Activated CD8-positive, alpha-beta T cell treated with anti-CD3 and anti-CD28 coated beads, Interleukin-2, amount 10 ng/mL, durations not matched to agents 7 days and 5 days (primary cell): ENCODE measurements at regions of chr20 and their contacts with region 1.

Region 1: DNA sequence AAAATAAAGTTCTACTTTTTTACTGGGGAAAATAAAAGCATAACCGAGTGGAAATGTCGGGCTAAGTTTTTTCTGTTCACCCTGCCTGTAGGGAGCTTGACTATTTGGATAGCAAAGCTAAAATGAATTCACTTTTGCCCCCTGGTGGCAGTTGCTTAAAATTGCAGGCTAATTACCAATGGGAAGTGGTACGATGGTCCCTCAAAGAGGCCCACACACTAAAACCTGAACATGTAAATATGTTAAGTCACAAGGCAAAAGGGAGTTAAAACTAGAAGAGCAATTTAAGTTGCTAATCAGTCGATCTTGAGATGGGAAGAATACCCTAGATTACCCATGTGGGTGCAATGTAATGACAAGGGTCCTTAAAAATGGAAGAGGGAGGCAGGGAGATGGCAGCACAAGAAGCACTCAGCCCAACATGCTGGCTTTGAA is 916 bp upstream of the SUN5 start:
- DNase-seq: peak; percentile 59
- ATAC-seq: no peak
- H3K4me3 Mint-ChIP-seq: no peak overlapping the region
- H3K27ac Mint-ChIP-seq: peak overlapping the region; percentile 32
- H3K4me1 Mint-ChIP-seq: peaks cover 3% of the 10 kb centered on the region
- H3K27me3 Mint-ChIP-seq: no peaks in the 10 kb centered on the region

Region 2: GRCh38 chr20:32902456-32903420 is 102.4 kb before region 1 on chr20:
- CTCF ChIA-PET with region 1: interaction called, 22 read pairs
- POLR2A ChIA-PET with region 1: no interaction called
- DNase-seq: peak; percentile 81
- ATAC-seq: peak; percentile 78
- H3K4me3 Mint-ChIP-seq: no peak overlapping the region
- H3K27ac Mint-ChIP-seq: peak overlapping the region; percentile 74
- H3K4me1 Mint-ChIP-seq: peaks cover 36% of the 10 kb centered on the region
- H3K27me3 Mint-ChIP-seq: no peaks in the 10 kb centered on the region

Region 3: GRCh38 chr20:32966881-32967781 is 38.0 kb before region 1 on chr20:
- CTCF ChIA-PET with region 1: interaction called, 22 read pairs
- POLR2A ChIA-PET with region 1: interaction called, 5 read pairs
- DNase-seq: peak; percentile 89
- ATAC-seq: peak; percentile 51
- H3K4me3 Mint-ChIP-seq: peak overlapping the region; percentile 69
- H3K27ac Mint-ChIP-seq: no peak overlapping the region
- H3K4me1 Mint-ChIP-seq: peaks cover 80% of the 10 kb centered on the region
- H3K27me3 Mint-ChIP-seq: no peaks in the 10 kb centered on the region

Region 4: DNA sequence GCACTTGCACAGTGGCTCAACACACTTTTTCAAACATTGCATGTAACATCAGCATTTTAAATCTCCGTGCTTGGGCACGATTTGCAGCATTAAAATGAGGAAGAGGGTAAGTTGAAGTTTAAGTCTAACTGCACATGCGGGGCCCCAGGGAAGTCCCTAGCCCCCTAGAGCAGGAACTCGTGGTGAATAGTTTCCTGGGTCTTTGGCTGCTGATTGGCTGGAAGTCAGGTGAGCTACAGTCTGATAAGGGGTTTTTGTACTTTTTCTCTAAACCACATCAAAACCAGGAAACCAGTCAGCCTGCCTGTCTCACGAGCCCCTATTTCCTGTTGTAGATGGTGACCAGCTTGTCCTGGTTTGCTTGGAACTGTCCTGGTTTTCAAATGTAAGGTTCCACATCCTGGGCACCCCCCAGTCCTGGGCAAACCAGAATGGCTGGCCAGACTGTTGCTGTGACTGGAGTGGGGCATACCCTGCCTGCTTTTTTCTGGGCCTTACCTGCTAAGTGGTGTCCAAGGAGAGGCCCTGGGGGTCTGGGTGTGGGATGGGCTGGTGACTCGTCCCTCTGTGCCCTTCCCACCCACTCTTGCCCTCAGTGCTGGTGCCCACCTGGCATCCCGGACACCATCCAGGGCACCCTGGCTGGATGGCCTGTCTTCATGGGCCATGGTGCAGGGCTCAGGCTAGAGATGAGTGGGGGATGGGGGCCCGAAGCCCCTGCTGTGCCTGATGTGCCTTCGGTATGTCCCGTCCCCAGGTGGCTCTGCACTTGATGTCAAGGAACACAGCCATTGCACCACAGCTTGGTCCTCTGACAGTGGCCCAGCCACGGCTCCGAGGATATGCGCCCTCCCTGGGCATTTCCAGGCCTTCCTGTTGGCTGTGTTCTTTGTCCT is 32.7 kb before region 1 on chr20:
- CTCF ChIA-PET with region 1: interaction called, 22 read pairs
- POLR2A ChIA-PET with region 1: interaction called, 5 read pairs
- DNase-seq: peak; percentile 93
- ATAC-seq: peak; percentile 85
- H3K4me3 Mint-ChIP-seq: peak overlapping the region; percentile 40
- H3K27ac Mint-ChIP-seq: no peak overlapping the region
- H3K4me1 Mint-ChIP-seq: peaks cover 47% of the 10 kb centered on the region
- H3K27me3 Mint-ChIP-seq: no peaks in the 10 kb centered on the region

Region 5: DNA sequence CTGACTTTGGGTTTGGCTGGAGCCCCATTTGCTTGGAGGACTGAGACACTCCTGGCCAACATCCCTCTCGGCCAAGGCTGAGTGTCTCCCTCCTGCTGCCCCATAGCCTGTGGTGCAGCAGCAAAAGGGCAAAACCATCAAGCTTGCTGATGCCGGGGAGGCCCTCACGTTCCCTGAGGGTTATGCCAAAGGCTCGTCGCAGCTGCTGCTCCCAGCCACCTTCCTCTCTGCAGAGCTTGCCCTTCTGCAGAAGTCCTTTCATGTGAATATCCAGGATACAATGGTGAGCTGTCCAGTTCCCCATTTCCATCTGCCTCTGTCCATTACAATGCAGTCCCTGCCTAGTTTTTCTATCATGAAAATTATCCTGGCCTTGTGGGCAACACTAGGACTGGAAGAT is 32.3 kb after region 1 on chr20:
- CTCF ChIA-PET with region 1: no interaction called
- POLR2A ChIA-PET with region 1: no interaction called
- DNase-seq: no peak
- ATAC-seq: no peak
- H3K4me3 Mint-ChIP-seq: no peak overlapping the region
- H3K27ac Mint-ChIP-seq: no peak overlapping the region
- H3K4me1 Mint-ChIP-seq: no peaks in the 10 kb centered on the region
- H3K27me3 Mint-ChIP-seq: peaks cover 7% of the 10 kb centered on the region